Activated T-helper 2 cell treated with anti-CD3 and anti-CD28 coated beads, Interferon-gamma antibody, Interleukin-2, Interleukin-4, amounts not matched to agents 10 μg/mL and 5 μg/mL and 100 μg/mL, durations not matched to agents 14 hours and 24 hours and 36 hours (primary cell): ENCODE measurements at regions of chr15 and their contacts with region 1.

Region 1: DNA sequence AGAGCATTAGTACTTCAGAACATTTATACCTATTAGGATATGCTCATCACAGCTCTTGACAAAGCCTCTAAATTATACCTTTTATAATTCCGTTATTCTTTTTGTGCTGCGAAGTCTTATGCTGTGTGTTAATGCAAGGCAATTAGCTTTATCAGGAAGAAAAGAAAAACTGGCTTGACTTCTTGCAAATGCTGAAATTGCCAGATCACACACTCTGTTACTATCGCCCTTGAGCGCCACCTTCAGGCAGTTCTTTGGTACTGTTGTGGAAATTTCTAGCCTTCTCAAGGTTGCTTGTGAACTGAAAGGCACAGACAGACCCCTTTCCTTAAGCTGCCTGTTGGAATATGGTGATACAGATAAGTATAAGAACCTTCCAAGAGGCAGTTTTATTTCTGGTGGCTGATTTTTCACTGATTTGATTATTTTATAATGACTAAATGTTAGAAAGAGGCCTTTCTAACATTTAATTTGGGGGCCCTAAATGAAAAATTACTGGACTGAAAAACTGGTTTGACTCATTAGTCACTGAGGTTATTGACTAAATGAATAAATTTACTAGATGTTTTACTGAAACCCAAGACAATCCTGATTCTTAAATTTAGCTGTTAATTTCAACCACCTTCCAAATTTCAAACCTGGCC is 126.2 kb upstream of the RASGRP1 start:
- DNase-seq: peak; percentile 75
- H3K4me3 Mint-ChIP-seq: no peak overlapping the region
- H3K27ac Mint-ChIP-seq: peak overlapping the region; percentile 29
- H3K4me1 Mint-ChIP-seq: peaks cover 77% of the 10 kb centered on the region
- H3K27me3 Mint-ChIP-seq: no peaks in the 10 kb centered on the region

Region 2: GRCh38 chr15:38474155-38474757 is 216.6 kb before region 1 on chr15:
- intact Hi-C with region 1: loop called (anchors 1 kb)
- DNase-seq: no peak
- H3K4me3 Mint-ChIP-seq: no peak overlapping the region
- H3K27ac Mint-ChIP-seq: no peak overlapping the region
- H3K4me1 Mint-ChIP-seq: peaks cover 4% of the 10 kb centered on the region
- H3K27me3 Mint-ChIP-seq: no peaks in the 10 kb centered on the region

Region 3: GRCh38 chr15:38486936-38487335 is 203.9 kb before region 1 on chr15:
- intact Hi-C with region 1: loop called (anchors 5 kb)
- DNase-seq: no peak
- H3K4me3 Mint-ChIP-seq: no peak overlapping the region
- H3K27ac Mint-ChIP-seq: peak overlapping the region; percentile 88
- H3K4me1 Mint-ChIP-seq: peaks cover 38% of the 10 kb centered on the region
- H3K27me3 Mint-ChIP-seq: no peaks in the 10 kb centered on the region

Region 4: GRCh38 chr15:38610748-38611147 is 80.1 kb before region 1 on chr15:
- intact Hi-C with region 1: loop called (anchors 1 kb)
- DNase-seq: peak; percentile 38
- H3K4me3 Mint-ChIP-seq: peak overlapping the region; percentile 15
- H3K27ac Mint-ChIP-seq: peak overlapping the region; percentile 96
- H3K4me1 Mint-ChIP-seq: peaks cover 72% of the 10 kb centered on the region
- H3K27me3 Mint-ChIP-seq: no peaks in the 10 kb centered on the region

Region 5: GRCh38 chr15:38651328-38652038 is 39.3 kb before region 1 on chr15:
- intact Hi-C with region 1: loop called (anchors 1 kb)
- DNase-seq: peak; percentile 56
- H3K4me3 Mint-ChIP-seq: peak overlapping the region; percentile 75
- H3K27ac Mint-ChIP-seq: peak overlapping the region; percentile 96
- H3K4me1 Mint-ChIP-seq: peaks cover 77% of the 10 kb centered on the region
- H3K27me3 Mint-ChIP-seq: no peaks in the 10 kb centered on the region